ENCODE measurements at regions of chr6 and their contacts with region 1.

Region 1: GRCh38 chr6:34248727-34249551 is at the start of gene SMIM29:
- DNase-seq: peak; percentile 98 to 99
- ATAC-seq: peak; percentile 99
- H3K4me3 ChIP-seq: peak within 1 kb of the TSS; percentile 49 to 54
- H3K27ac ChIP-seq: peak within 1 kb of the TSS in 1 of 2 donors; percentile 67
- H3K4me1 ChIP-seq: no peaks in the 10 kb centered on the region
- H3K27me3 ChIP-seq: no peaks in the 10 kb centered on the region
- total RNA-seq, gene SMIM29: 14.0 to 20.0 TPM

Region 2: DNA sequence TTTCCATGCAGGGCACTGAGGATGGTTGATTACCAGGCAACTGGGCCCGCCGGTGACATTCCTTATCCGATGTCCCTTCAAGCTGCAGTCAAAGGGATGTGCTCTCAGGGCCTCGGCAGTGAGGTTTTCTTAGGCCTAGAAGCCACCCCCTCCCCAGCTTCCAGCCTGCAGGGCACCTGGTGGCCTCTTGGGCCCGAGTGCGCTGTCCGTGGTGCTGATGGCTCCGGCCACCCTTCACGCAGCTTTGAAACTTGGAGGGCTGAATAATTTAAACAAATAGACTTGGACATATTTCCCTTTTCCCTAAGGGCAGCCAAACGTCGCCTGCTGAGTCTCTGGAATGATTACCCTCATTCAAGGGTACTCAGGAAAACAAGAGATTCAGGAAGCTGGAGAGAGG is 436.3 kb before region 1 on chr6:
- intact Hi-C with region 1: no loop called
- DNase-seq: peak in 1 of 2 donors; percentile 80
- ATAC-seq: no peak
- H3K4me3 ChIP-seq: no peak overlapping the region
- H3K27ac ChIP-seq: no peak overlapping the region
- H3K4me1 ChIP-seq: no peaks in the 10 kb centered on the region
- H3K27me3 ChIP-seq: no peaks in the 10 kb centered on the region

Region 3: DNA sequence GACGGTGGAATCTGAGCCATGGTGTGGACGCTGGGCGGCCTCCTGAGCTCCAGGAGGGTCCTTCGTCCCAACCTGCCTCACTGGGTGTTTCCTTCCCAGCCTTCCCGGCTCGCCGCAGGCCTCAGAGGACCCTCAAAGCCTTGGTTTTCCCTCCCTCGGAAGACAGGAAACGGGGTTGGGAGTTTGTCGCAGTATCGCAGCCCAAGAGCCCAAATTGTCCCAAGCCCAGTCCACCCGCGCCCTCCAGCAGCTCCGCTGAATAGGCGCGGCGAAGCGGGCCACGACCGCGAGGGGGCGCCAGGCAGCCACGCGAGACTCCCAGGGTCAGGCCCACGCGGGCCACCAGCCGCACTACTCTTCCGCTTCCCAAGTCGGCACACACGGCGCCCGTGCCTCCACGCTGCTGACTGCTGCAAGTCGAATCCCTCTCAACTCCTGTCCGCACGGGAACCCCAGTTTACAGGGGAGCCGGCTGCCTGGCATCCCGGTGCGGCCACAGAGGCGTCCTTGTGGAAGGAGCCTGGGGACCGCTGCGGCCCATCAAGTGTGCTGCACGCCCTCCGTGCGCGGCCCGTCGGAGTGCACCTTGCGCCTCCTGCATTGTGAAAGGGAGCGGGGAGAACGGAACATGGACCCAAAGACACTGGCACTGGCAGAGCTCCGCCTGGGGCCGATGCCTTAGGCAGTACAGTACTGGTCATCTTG is 52.7 kb before region 1 on chr6:
- intact Hi-C with region 1: loop called (anchors 5 kb)
- DNase-seq: peak; percentile 92 to 98
- ATAC-seq: peak; percentile 98
- H3K4me3 ChIP-seq: peak overlapping the region in 1 of 2 donors; percentile 3
- H3K27ac ChIP-seq: no peak overlapping the region
- H3K4me1 ChIP-seq: no peaks in the 10 kb centered on the region
- H3K27me3 ChIP-seq: no peaks in the 10 kb centered on the region

Region 4: GRCh38 chr6:34315780-34316179 is 66.8 kb after region 1 on chr6:
- intact Hi-C with region 1: loop called in 1 of 2 experiments (anchors 5 kb)
- DNase-seq: no peak
- ATAC-seq: no peak
- H3K4me3 ChIP-seq: no peak overlapping the region
- H3K27ac ChIP-seq: no peak overlapping the region
- H3K4me1 ChIP-seq: peaks cover 0 to 6% of the 10 kb centered on the region in 2 donors
- H3K27me3 ChIP-seq: no peaks in the 10 kb centered on the region

Region 5: GRCh38 chr6:34392497-34393190 is 143.7 kb after region 1 on chr6 and contains the start of gene NUDT3:
- intact Hi-C with region 1: loop called (anchors 1 to 5 kb)
- DNase-seq: peak; percentile 97 to 99
- ATAC-seq: peak; percentile 96
- H3K4me3 ChIP-seq: peak within 1 kb of the TSS; percentile 57 to 76
- H3K27ac ChIP-seq: peak within 1 kb of the TSS; percentile 15 to 60
- H3K4me1 ChIP-seq: no peaks in the 10 kb centered on the region
- H3K27me3 ChIP-seq: no peaks in the 10 kb centered on the region
- total RNA-seq, gene NUDT3: 47.3 to 50.2 TPM

Region 6: GRCh38 chr6:34414999-34415858 is 166.3 kb after region 1 on chr6:
- intact Hi-C with region 1: loop called (anchors 1 to 2 kb)
- DNase-seq: peak in 1 of 2 donors; percentile 69
- ATAC-seq: peak; percentile 94
- H3K4me3 ChIP-seq: no peak overlapping the region
- H3K27ac ChIP-seq: peak overlapping the region; percentile 65 to 70
- H3K4me1 ChIP-seq: no peaks in the 10 kb centered on the region
- H3K27me3 ChIP-seq: no peaks in the 10 kb centered on the region

Measured in aorta (tissue), 5 donors.